IMR-90 (cell line): ENCODE measurements at regions of chrX and their contacts with region 1.

Region 1: GRCh38 chrX:12894074-12895030 is 12.1 kb upstream of the TLR8 start:
- DNase-seq: peak; percentile 18
- ATAC-seq: peak; percentile 48; the same call in 1 of the 2 replicates
- H3K4me3 ChIP-seq: no peak overlapping the region
- H3K27ac ChIP-seq: no peak overlapping the region
- H3K4me1 ChIP-seq: no peaks in the 10 kb centered on the region
- H3K27me3 ChIP-seq: no peaks in the 10 kb centered on the region
- CTCF ChIP-seq: peak; percentile 50
- POLR2A ChIP-seq: no peak
- RAD21 ChIP-seq: peak; percentile 31; the same call in 1 of the 2 replicates

Region 2: DNA sequence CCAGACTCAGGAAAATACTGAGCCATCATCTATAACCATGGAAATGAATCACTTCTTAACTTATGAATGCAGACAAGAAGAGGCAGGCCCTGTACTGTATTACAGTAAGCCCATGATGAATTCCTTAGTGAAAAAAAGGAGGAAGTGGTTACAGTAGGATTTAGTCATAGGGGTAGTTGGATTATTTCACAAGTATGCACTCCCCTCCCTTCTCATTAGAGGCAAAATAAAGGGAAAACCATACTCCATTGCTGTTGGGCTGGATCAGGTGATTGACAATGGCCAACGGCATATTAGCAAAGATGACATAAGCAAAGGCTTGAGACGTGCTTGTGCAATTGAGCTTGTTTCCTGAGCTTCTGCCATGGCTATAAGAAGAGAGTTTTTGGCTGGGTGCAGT is 284.3 kb before region 1 on chrX:
- CTCF ChIA-PET with region 1: no interaction called
- POLR2A ChIA-PET with region 1: no interaction called
- dilution Hi-C with region 1: no loop called
- in situ Hi-C with region 1: no loop called
- intact Hi-C with region 1: no loop called
- DNase-seq: peak; percentile 55
- ATAC-seq: peak; percentile 80
- H3K4me3 ChIP-seq: no peak overlapping the region
- H3K27ac ChIP-seq: no peak overlapping the region
- H3K4me1 ChIP-seq: no peaks in the 10 kb centered on the region
- H3K27me3 ChIP-seq: no peaks in the 10 kb centered on the region
- CTCF ChIP-seq: no peak
- POLR2A ChIP-seq: no peak
- RAD21 ChIP-seq: no peak

Region 3: GRCh38 chrX:12814420-12814819 is 79.9 kb before region 1 on chrX:
- CTCF ChIA-PET with region 1: interaction called, 3 read pairs
- POLR2A ChIA-PET with region 1: no interaction called
- dilution Hi-C with region 1: no loop called
- in situ Hi-C with region 1: no loop called
- intact Hi-C with region 1: loop called (anchors 1 kb)
- DNase-seq: peak; percentile 62
- ATAC-seq: peak; percentile 87
- H3K4me3 ChIP-seq: no peak overlapping the region
- H3K27ac ChIP-seq: no peak overlapping the region
- H3K4me1 ChIP-seq: no peaks in the 10 kb centered on the region
- H3K27me3 ChIP-seq: no peaks in the 10 kb centered on the region
- CTCF ChIP-seq: peak; percentile 60
- POLR2A ChIP-seq: no peak
- RAD21 ChIP-seq: peak; percentile 71